Spleen (tissue), 13 donors: ENCODE measurements at regions of chr12 and their contacts with region 1.

Region 1: DNA sequence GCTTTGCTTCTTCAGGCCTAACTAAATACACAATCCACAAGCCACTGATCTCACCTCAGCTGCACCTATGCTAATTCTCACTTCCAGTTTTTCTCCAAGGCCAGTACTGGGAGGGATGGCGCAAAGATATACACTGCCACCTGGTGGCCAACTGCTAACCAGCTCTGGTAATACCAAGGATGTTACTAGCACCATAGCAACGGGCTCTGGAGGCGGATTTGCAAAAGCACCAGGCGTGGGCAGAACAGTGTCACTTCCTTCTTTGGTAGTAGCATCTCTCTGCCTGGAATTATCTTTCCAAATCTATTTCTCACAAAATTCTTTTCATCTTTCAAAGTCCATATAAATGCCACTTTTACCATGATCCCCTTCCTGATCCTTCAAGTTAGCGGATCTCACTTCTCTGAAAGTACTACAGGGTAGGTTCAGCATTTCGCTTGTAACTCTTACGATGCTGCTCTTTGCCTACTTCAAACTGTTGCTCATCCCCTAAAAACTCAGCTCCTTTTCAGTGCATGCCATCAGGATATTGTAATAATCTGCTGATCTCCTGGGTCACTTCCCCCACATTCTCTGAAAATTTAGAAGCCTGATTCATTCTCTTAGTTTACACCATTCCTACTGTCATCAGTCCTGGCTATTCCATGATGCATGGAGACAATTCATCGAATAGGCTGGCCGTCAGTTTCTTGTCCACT is 37.1 kb upstream of the FOXJ2 start:
- DNase-seq: peak; percentile 94
- H3K4me3 ChIP-seq: no peak overlapping the region
- H3K27ac ChIP-seq: peak overlapping the region in 5 of 8 donors; percentile 5 to 71 (median 29)
- H3K4me1 ChIP-seq: peaks cover 3 to 47% (median 15%) of the 10 kb centered on the region in 6 donors
- H3K27me3 ChIP-seq: no peaks in the 10 kb centered on the region
- CTCF ChIP-seq: peak; percentile 81 to 97 (median 94)
- POLR2A ChIP-seq: no peak

Region 2: GRCh38 chr12:7667125-7667524 is 328.3 kb before region 1 on chr12:
- intact Hi-C with region 1: no loop called
- DNase-seq: no peak
- H3K4me3 ChIP-seq: no peak overlapping the region
- H3K27ac ChIP-seq: no peak overlapping the region
- H3K4me1 ChIP-seq: peaks cover 0 to 4% (median 0%) of the 10 kb centered on the region in 6 donors
- H3K27me3 ChIP-seq: no peaks in the 10 kb centered on the region
- CTCF ChIP-seq: no peak
- POLR2A ChIP-seq: no peak

Region 3: GRCh38 chr12:7859552-7859951 is 135.9 kb before region 1 on chr12:
- intact Hi-C with region 1: loop called (anchors 5 kb)
- DNase-seq: no peak
- H3K4me3 ChIP-seq: no peak overlapping the region
- H3K27ac ChIP-seq: peak overlapping the region in 3 of 8 donors; percentile 13 to 62 (median 61)
- H3K4me1 ChIP-seq: peaks cover 0 to 14% (median 6%) of the 10 kb centered on the region in 6 donors
- H3K27me3 ChIP-seq: peaks cover 0 to 8% (median 0%) of the 10 kb centered on the region in 7 donors
- CTCF ChIP-seq: no peak
- POLR2A ChIP-seq: no peak

Region 4: GRCh38 chr12:7933255-7933729 is 62.1 kb before region 1 on chr12:
- intact Hi-C with region 1: loop called (anchors 5 kb)
- DNase-seq: peak; percentile 85
- H3K4me3 ChIP-seq: peak overlapping the region; percentile 57 to 82 (median 66)
- H3K27ac ChIP-seq: peak overlapping the region in 7 of 8 donors; percentile 88 to 95 (median 94)
- H3K4me1 ChIP-seq: peaks cover 12 to 90% (median 57%) of the 10 kb centered on the region in 6 donors
- H3K27me3 ChIP-seq: no peaks in the 10 kb centered on the region
- CTCF ChIP-seq: peak; percentile 55 to 92 (median 73)
- POLR2A ChIP-seq: no peak